T-cell (primary cell): ENCODE measurements at regions of chr1 and their contacts with region 1.

Region 1: GRCh38 chr1:175035865-175036264 is 12.6 kb upstream of the MRPS14 start:
- DNase-seq: no peak
- ATAC-seq: no peak
- H3K4me3 ChIP-seq: no peak overlapping the region
- H3K4me3 Mint-ChIP-seq: no peak overlapping the region
- H3K27ac ChIP-seq: no peak overlapping the region
- H3K27ac Mint-ChIP-seq: no peak overlapping the region
- H3K4me1 ChIP-seq: no peaks in the 10 kb centered on the region
- H3K4me1 Mint-ChIP-seq: no peaks in the 10 kb centered on the region
- H3K27me3 ChIP-seq: no peaks in the 10 kb centered on the region
- H3K27me3 Mint-ChIP-seq: peaks cover 2 to 3% of the 10 kb centered on the region in 2 donors

Region 2: DNA sequence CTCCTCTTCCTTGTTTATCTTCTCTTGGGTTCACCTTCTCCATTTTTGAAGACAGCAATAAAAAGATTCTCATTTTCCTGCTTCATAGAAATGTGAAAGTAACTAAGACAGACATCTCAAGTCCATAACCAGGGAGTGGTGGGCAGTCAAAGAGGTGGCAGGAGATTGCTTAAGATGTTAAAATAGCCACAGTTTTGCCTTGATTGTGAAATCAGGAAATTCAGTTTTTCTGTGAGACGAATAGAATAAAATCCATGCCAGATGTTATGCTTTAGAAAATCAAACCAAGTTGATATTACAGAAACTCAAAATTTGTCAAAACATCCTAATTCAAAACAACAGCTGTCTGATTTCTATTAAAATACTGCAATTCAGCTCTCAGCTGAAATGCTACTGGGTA is 89.0 kb after region 1 on chr1:
- CTCF ChIA-PET with region 1: interaction called in 1 of 2 experiments, 11 read pairs
- POLR2A ChIA-PET with region 1: no interaction called
- DNase-seq: no peak
- ATAC-seq: no peak
- H3K4me3 ChIP-seq: no peak overlapping the region
- H3K4me3 Mint-ChIP-seq: no peak overlapping the region
- H3K27ac ChIP-seq: no peak overlapping the region
- H3K27ac Mint-ChIP-seq: no peak overlapping the region
- H3K4me1 ChIP-seq: no peaks in the 10 kb centered on the region
- H3K4me1 Mint-ChIP-seq: no peaks in the 10 kb centered on the region
- H3K27me3 ChIP-seq: peaks cover 0 to 2% of the 10 kb centered on the region in 2 experiments
- H3K27me3 Mint-ChIP-seq: peaks cover 0 to 2% of the 10 kb centered on the region in 2 donors